Sigmoid colon (tissue), 7 donors: ENCODE measurements at regions of chr1 and their contacts with region 1.

Region 1: GRCh38 chr1:44786138-44786840 is 1.7 kb downstream of the BEST4 start:
- DNase-seq: peak; percentile 87
- H3K4me3 ChIP-seq: peak overlapping the region; percentile 34 to 61 (median 50)
- H3K27ac ChIP-seq: peak overlapping the region; percentile 41 to 70 (median 64)
- H3K4me1 ChIP-seq: peaks cover 0 to 34% (median 25%) of the 10 kb centered on the region in 4 donors
- H3K27me3 ChIP-seq: no peaks in the 10 kb centered on the region
- CTCF ChIP-seq: peak; percentile 96 to 100 (median 98)
- EP300 ChIP-seq: no peak
- POLR2A ChIP-seq: no peak

Region 2: DNA sequence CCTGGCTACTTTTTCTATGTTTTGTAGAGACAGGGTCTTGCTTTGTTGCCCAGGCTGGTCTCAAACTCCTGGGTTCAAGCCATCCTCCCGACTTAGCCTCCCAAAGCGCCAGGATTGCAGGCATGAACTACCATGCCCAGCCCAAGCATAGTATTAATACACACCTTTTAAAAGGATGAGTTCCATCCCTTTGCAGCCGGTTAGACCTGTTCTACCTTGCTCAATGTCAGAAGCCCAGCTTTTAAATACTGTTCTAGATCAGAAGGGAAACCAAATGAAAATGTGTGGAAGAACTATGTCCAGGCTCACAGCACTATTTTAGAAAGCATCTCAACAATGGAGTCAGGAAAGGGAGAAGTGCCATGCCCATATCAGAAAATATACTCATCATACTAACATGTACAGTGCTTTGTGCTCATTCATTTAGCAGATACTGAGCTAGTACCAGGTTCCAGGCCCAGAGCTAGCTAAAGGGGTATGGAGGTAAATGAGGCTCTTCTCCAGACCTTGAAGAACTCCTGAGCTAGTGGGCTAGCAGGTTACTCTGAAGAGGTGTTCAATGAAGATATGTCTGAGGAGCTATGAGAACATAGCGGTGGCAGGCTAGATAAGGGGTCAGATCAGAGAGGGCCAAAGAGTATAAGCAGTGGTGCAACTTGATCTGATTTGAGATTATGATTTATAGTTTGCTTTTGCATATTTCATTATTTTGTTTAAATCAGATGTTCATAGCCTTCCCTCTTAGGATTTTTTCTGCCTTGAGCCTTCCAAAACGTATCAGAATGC is 303.0 kb before region 1 on chr1:
- intact Hi-C with region 1: no loop called
- DNase-seq: no peak
- H3K4me3 ChIP-seq: no peak overlapping the region
- H3K27ac ChIP-seq: no peak overlapping the region
- H3K4me1 ChIP-seq: peaks cover 0 to 14% (median 7%) of the 10 kb centered on the region in 4 donors
- H3K27me3 ChIP-seq: no peaks in the 10 kb centered on the region
- CTCF ChIP-seq: no peak
- EP300 ChIP-seq: no peak
- POLR2A ChIP-seq: no peak

Region 3: GRCh38 chr1:44730741-44731512 is 55.4 kb before region 1 on chr1 and contains the start of gene RNU5D-1:
- intact Hi-C with region 1: loop called (anchors 1 kb)
- DNase-seq: peak; percentile 96
- H3K4me3 ChIP-seq: peak within 1 kb of the TSS in 3 of 4 donors; percentile 13 to 20 (median 14)
- H3K27ac ChIP-seq: peak within 1 kb of the TSS; percentile 77 to 88 (median 82)
- H3K4me1 ChIP-seq: peaks cover 0 to 8% (median 4%) of the 10 kb centered on the region in 4 donors
- H3K27me3 ChIP-seq: no peaks in the 10 kb centered on the region
- CTCF ChIP-seq: peak; percentile 39 to 85 (median 68)
- EP300 ChIP-seq: peak in 2 of 4 donors; percentile 10 to 20
- POLR2A ChIP-seq: peak; percentile 95
- total RNA-seq, gene RNU5D-1: not detected